ENCODE measurements at regions of chr3 and their contacts with region 1.

Region 1: GRCh38 chr3:9915254-9916141 is 1.4 kb upstream of the IL17RC start:
- DNase-seq: peak; percentile 78 to 86 (median 80)
- ATAC-seq: peak; percentile 42 to 70 (median 66)
- H3K4me3 ChIP-seq: peak overlapping the region; percentile 49 to 87 (median 65)
- H3K27ac ChIP-seq: peak overlapping the region; percentile 73 to 96 (median 91)
- H3K4me1 ChIP-seq: peaks cover 4 to 42% (median 30%) of the 10 kb centered on the region in 12 donors
- H3K27me3 ChIP-seq: no peaks in the 10 kb centered on the region
- CTCF ChIP-seq: peak in 10 of 12 donors; percentile 8 to 63 (median 40)
- POLR2A ChIP-seq: peak in 1 of 2 donors; percentile 37

Region 2: DNA sequence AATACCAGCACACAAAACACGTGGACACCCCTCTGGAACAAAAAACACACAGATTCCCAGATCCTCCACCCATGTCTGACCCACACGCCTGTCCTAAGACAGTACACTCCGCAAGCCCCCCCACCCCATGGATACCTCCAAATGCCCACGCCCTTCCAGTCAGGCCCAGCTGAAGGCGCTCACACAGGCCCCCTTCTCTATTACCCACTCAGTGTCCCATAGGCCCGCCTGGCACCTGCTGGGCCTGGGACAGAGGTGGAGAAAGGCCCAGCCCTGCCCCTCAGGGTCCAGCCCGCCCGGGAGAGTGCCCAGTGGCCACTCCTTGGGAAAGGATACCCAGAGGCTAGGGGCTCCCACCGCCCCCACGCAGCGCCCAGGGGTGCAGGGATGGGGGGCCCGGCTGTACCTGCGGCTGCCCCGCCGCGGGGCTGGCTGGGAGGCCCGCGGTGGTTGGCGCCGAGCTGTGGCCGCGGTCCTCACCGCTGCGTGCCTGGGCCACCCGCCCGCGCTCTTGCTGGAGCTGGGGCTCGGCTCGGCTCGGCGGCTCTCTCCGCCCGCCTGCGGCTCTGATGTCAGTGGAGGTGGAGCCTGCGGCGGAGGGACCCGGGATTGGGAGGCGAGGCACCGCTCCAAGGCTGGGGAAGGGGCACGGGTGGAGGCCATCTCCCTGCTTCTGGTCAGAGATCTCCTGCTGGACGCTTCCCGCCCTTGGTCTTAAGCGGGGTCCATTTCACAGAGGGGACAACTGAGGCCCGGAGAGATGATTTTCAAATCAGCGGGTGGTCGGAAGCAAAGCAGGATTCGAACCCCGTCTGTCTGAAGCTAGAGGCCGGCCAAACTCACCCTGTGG is 145.8 kb before region 1 on chr3 and contains the start of gene CAMK1:
- intact Hi-C with region 1: no loop called
- DNase-seq: peak; percentile 85 to 93 (median 88)
- ATAC-seq: peak; percentile 78 to 96 (median 92)
- H3K4me3 ChIP-seq: peak within 1 kb of the TSS; percentile 58 to 96 (median 78)
- H3K27ac ChIP-seq: peak within 1 kb of the TSS; percentile 51 to 90 (median 84)
- H3K4me1 ChIP-seq: peaks cover 0 to 46% (median 31%) of the 10 kb centered on the region in 12 donors
- H3K27me3 ChIP-seq: no peaks in the 10 kb centered on the region
- CTCF ChIP-seq: no peak
- POLR2A ChIP-seq: peak in 1 of 2 donors; percentile 86
- total RNA-seq, gene CAMK1: 9.7 to 26.3 (median 14.7) TPM

Region 3: DNA sequence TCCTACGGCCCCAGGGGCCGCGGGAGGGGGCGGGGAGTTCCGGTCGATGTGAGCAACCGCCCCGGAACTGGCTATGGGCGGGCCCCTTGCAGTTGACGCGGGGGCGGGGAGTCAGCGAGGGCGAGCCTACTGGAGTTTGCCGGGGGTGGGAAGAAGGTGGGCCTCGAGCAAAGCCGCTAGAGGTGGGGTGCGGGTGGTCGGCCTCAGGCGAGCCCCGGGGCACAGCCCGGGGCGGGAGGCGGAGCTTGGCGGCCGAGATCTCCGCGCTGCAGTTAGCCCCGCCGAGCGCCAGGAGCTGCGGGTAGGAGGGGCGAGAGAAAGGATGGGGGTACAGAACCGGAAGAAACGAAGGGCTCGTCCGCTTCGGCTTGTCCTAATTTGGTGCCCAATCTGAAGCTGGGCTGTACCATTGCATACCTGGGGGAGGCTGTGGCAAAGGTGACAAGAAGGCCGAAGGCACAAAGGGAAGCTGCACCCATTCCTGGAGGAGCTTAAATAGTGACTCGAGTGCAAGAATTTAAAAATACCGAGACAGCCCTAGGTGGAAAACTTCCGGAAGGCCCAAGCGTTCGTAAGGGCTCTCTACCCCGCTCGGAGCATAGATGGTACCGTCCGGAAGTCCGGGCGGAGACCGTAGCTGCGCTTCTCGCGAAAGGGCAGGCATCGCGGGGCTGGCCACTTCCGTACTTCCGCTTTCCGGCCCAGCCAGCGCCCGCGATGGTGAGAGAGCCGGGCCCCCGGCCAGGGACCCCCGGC is 122.9 kb before region 1 on chr3 and contains the starts of genes ARPC4 and TADA3:
- intact Hi-C with region 1: loop called in 1 of 10 experiments (anchors 10 kb)
- DNase-seq: peak; percentile 95 to 97 (median 96)
- ATAC-seq: peak; percentile 94 to 96 (median 94)
- H3K4me3 ChIP-seq: peak within 1 kb of the TSS; percentile 66 to 100 (median 92)
- H3K27ac ChIP-seq: peak within 1 kb of the TSS; percentile 89 to 99 (median 97)
- H3K4me1 ChIP-seq: peaks cover 0 to 57% (median 24%) of the 10 kb centered on the region in 12 donors
- H3K27me3 ChIP-seq: no peaks in the 10 kb centered on the region
- CTCF ChIP-seq: peak in 2 of 12 donors; percentile 18 to 19
- POLR2A ChIP-seq: peak in 1 of 2 donors; percentile 66
- total RNA-seq, gene ARPC4: 48.8 to 147 (median 79.7) TPM
- total RNA-seq, gene TADA3: 32.8 to 61.5 (median 45.9) TPM

Region 4: DNA sequence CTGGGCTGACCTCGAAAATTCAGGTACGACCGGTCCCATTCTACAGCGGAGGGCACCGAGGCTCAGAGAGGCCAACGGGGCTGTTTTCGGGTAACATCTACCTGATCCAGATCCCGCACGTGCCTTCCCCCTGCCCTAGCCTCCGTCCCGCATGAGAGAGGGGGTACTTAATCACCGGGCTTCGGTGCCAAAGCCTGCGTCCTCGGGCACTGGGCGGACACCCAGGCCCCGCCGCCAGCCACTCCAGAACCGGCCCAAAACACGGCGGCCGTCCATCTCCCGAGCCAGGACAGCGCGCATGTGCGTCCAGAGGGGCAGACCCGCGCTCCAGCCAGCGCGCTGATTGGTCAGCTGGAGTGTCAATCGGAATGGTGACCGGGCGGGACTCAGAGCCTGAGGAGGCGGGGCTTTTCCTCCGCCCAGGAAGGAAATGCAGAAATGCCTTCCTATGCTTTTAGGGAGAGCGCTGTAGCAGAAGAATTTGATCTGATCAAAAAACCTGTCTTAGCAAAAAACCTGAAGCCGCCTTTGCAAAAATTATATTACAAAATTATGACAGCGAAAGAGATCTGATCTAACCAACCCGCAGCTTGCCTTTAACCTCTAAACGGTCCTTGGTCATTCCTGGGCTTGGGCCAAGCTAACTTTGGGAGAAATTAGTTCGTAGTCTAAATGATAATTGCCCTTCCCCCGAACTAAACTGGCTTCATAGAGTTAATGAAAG is 71.6 kb before region 1 on chr3 and contains the start of gene RPUSD3:
- intact Hi-C with region 1: loop called in 1 of 10 experiments (anchors 10 kb)
- DNase-seq: peak; percentile 98 to 100 (median 99)
- ATAC-seq: peak; percentile 99 to 100 (median 99)
- H3K4me3 ChIP-seq: peak within 1 kb of the TSS; percentile 43 to 94 (median 76)
- H3K27ac ChIP-seq: peak within 1 kb of the TSS; percentile 43 to 87 (median 86)
- H3K4me1 ChIP-seq: peaks cover 0 to 21% (median 8%) of the 10 kb centered on the region in 12 donors
- H3K27me3 ChIP-seq: no peaks in the 10 kb centered on the region
- CTCF ChIP-seq: no peak
- POLR2A ChIP-seq: peak in 1 of 2 donors; percentile 87
- total RNA-seq, gene RPUSD3: 25.8 to 68.6 (median 31.1) TPM

Region 5: GRCh38 chr3:9890249-9891071 is 25.0 kb before region 1 on chr3 and contains the start of gene JAGN1:
- intact Hi-C with region 1: loop called in 2 of 10 experiments (anchors 2 kb)
- DNase-seq: peak; percentile 91 to 93 (median 92)
- ATAC-seq: peak; percentile 95 to 99 (median 98)
- H3K4me3 ChIP-seq: peak within 1 kb of the TSS; percentile 61 to 100 (median 94)
- H3K27ac ChIP-seq: peak within 1 kb of the TSS; percentile 87 to 98 (median 96)
- H3K4me1 ChIP-seq: peaks cover 0 to 27% (median 13%) of the 10 kb centered on the region in 12 donors
- H3K27me3 ChIP-seq: no peaks in the 10 kb centered on the region
- CTCF ChIP-seq: peak in 3 of 12 donors; percentile 19 to 24 (median 21)
- POLR2A ChIP-seq: peak in 1 of 2 donors; percentile 88
- total RNA-seq, gene JAGN1: 15.1 to 40.3 (median 21.2) TPM

Region 6: DNA sequence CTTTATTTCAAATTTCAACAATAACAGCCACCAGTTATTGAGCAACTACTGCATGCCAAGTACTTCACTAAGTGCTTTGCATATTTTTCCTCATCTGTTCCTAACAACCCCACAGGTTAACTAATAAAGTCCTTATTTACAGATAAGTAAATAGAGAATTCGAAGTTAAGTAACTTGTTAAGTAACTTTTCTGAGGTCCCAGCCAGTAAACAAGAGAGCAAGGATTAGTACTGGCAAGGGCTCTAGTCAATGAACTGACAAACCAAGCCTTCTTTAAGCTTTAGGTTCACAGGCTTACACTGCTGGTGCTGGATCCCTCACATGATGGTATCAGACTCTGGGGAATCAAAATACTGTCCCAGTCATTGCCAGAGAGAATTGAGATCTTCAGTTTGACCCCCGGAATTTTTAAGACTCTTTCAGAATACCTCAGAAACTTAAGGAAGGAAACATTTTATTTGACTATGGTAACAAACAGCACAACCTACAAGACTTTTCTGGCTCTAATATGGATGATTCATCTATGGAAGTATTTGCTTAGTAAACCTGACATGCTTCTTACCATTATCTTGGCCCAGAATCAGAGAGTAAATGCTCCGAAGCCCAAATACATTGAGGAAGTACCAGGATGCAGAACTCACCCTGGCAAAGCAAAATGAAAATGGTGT is 54.7 kb after region 1 on chr3:
- intact Hi-C with region 1: no loop called
- DNase-seq: no peak
- ATAC-seq: no peak
- H3K4me3 ChIP-seq: no peak overlapping the region
- H3K27ac ChIP-seq: no peak overlapping the region
- H3K4me1 ChIP-seq: no peaks in the 10 kb centered on the region
- H3K27me3 ChIP-seq: no peaks in the 10 kb centered on the region
- CTCF ChIP-seq: no peak
- POLR2A ChIP-seq: no peak

Region 7: GRCh38 chr3:10142707-10143566 is 227.4 kb after region 1 on chr3:
- intact Hi-C with region 1: no loop called
- DNase-seq: peak in 1 of 5 donors; percentile 26
- ATAC-seq: no peak
- H3K4me3 ChIP-seq: peak overlapping the region; percentile 51 to 94 (median 80)
- H3K27ac ChIP-seq: peak overlapping the region in 6 of 12 donors; percentile 75 to 93 (median 90)
- H3K4me1 ChIP-seq: peaks cover 0 to 52% (median 25%) of the 10 kb centered on the region in 12 donors
- H3K27me3 ChIP-seq: no peaks in the 10 kb centered on the region
- CTCF ChIP-seq: no peak
- POLR2A ChIP-seq: no peak